ENCODE measurements at regions of chr9 and their contacts with region 1.

Region 1: GRCh38 chr9:129139993-129140396 is 28.8 kb downstream of the PTPA start:
- DNase-seq: peak; percentile 31 to 82 (median 66)
- ATAC-seq: peak; percentile 90
- H3K4me3 ChIP-seq: peak overlapping the region; percentile 64
- H3K4me3 Mint-ChIP-seq: peak overlapping the region; percentile 85 to 96 (median 90)
- H3K27ac ChIP-seq: peak overlapping the region; percentile 92
- H3K27ac Mint-ChIP-seq: peak overlapping the region; percentile 88 to 99 (median 94)
- H3K4me1 ChIP-seq: peaks cover 24 to 35% of the 10 kb centered on the region in 2 donors
- H3K4me1 Mint-ChIP-seq: peaks cover 11 to 45% (median 29%) of the 10 kb centered on the region in 7 donors
- H3K27me3 ChIP-seq: no peaks in the 10 kb centered on the region
- H3K27me3 Mint-ChIP-seq: no peaks in the 10 kb centered on the region

Region 2: DNA sequence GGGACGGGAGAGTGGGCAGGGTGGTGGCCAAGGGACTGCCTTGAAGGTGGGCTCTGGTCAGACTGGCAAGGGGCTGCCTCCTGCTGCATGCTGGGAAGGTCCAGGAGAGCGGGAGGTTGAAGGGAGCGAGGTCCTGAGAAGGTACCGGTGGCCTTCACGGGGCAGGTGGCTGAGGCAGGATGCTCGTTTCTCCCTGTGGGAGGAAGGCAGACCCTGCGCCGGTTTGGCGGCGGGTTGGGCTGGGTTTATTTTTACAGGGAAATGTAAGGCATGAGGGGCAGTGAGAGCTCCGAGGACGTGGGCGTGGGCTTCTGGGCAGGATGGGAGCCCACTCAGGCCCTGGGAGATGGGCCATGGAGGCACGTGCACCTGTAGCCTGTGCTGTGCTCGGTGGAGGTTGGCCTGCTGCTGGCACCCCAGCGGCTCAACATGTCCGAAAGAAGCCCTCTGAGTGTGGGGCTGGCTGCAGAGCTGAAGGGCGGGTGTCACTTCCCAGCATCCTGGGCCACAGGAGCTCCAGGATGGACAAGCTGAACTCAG is 10.7 kb after region 1 on chr9:
- CTCF ChIA-PET with region 1: interaction called, 14 read pairs
- POLR2A ChIA-PET with region 1: interaction called, 3 read pairs
- intact Hi-C with region 1: no loop called
- DNase-seq: no peak
- ATAC-seq: no peak
- H3K4me3 ChIP-seq: no peak overlapping the region
- H3K4me3 Mint-ChIP-seq: no peak overlapping the region
- H3K27ac ChIP-seq: no peak overlapping the region
- H3K27ac Mint-ChIP-seq: no peak overlapping the region
- H3K4me1 ChIP-seq: no peaks in the 10 kb centered on the region
- H3K4me1 Mint-ChIP-seq: peaks cover 0 to 11% (median 0%) of the 10 kb centered on the region in 7 donors
- H3K27me3 ChIP-seq: no peaks in the 10 kb centered on the region
- H3K27me3 Mint-ChIP-seq: no peaks in the 10 kb centered on the region

Region 3: DNA sequence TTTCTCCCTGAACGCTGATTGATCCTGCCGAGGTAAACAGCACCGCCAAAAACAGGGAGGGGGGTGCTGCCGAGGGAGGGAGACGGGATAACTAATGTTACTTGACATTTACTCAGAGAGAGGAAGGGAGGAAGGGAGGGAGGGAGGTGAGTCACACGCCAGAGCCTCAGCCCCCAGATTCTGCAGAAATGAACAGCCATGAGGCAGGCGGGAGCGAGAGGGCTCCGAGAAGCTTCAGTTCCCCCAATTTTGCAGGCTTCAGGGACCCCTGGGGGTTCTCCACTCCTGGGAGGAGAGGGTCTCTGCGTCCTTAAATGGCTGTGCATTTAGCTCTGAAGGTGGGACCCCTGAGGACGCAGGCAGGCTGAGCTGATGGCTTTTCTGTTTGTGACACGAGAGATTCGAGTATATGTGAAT is 97.2 kb after region 1 on chr9:
- CTCF ChIA-PET with region 1: interaction called, 7 read pairs
- POLR2A ChIA-PET with region 1: interaction called, 10 read pairs
- intact Hi-C with region 1: no loop called
- DNase-seq: peak in 8 of 9 donors; percentile 12 to 61 (median 38)
- ATAC-seq: peak; percentile 45
- H3K4me3 ChIP-seq: peak overlapping the region; percentile 66
- H3K4me3 Mint-ChIP-seq: peak overlapping the region; percentile 87 to 97 (median 92)
- H3K27ac ChIP-seq: peak overlapping the region; percentile 77
- H3K27ac Mint-ChIP-seq: peak overlapping the region; percentile 85 to 98 (median 95)
- H3K4me1 ChIP-seq: peaks cover 35 to 36% of the 10 kb centered on the region in 2 donors
- H3K4me1 Mint-ChIP-seq: peaks cover 38 to 77% (median 71%) of the 10 kb centered on the region in 7 donors
- H3K27me3 ChIP-seq: no peaks in the 10 kb centered on the region
- H3K27me3 Mint-ChIP-seq: no peaks in the 10 kb centered on the region

Region 4: GRCh38 chr9:129487642-129488409 is 347.8 kb after region 1 on chr9:
- CTCF ChIA-PET with region 1: no interaction called
- POLR2A ChIA-PET with region 1: no interaction called
- intact Hi-C with region 1: loop called in 1 of 2 experiments (anchors 2 kb)
- DNase-seq: peak in 5 of 9 donors; percentile 29 to 54 (median 43)
- ATAC-seq: peak; percentile 3
- H3K4me3 ChIP-seq: peak overlapping the region; percentile 70
- H3K4me3 Mint-ChIP-seq: peak overlapping the region; percentile 75 to 92 (median 90)
- H3K27ac ChIP-seq: peak overlapping the region; percentile 66
- H3K27ac Mint-ChIP-seq: peak overlapping the region; percentile 87 to 99 (median 94)
- H3K4me1 ChIP-seq: peaks cover 32 to 46% of the 10 kb centered on the region in 2 donors
- H3K4me1 Mint-ChIP-seq: peaks cover 36 to 68% (median 58%) of the 10 kb centered on the region in 7 donors
- H3K27me3 ChIP-seq: no peaks in the 10 kb centered on the region
- H3K27me3 Mint-ChIP-seq: no peaks in the 10 kb centered on the region

Region 5: GRCh38 chr9:129726322-129727160 is 586.5 kb after region 1 on chr9:
- CTCF ChIA-PET with region 1: interaction called, 3 read pairs
- POLR2A ChIA-PET with region 1: no interaction called
- intact Hi-C with region 1: loop called in 1 of 2 experiments (anchors 5 kb)
- DNase-seq: peak; percentile 30 to 73 (median 56)
- ATAC-seq: peak; percentile 95
- H3K4me3 ChIP-seq: no peak overlapping the region
- H3K4me3 Mint-ChIP-seq: peak overlapping the region in 9 of 10 donors; percentile 16 to 63 (median 55)
- H3K27ac ChIP-seq: no peak overlapping the region
- H3K27ac Mint-ChIP-seq: no peak overlapping the region
- H3K4me1 ChIP-seq: no peaks in the 10 kb centered on the region
- H3K4me1 Mint-ChIP-seq: peaks cover 0 to 4% (median 3%) of the 10 kb centered on the region in 7 donors
- H3K27me3 ChIP-seq: no peaks in the 10 kb centered on the region
- H3K27me3 Mint-ChIP-seq: peaks cover 0 to 23% (median 5%) of the 10 kb centered on the region in 5 donors

Region 6: GRCh38 chr9:130235897-130236668 is 1096.1 kb after region 1 on chr9:
- CTCF ChIA-PET with region 1: no interaction called
- POLR2A ChIA-PET with region 1: no interaction called
- intact Hi-C with region 1: loop called in 1 of 2 experiments (anchors 5 kb)
- DNase-seq: peak; percentile 41 to 79 (median 63)
- ATAC-seq: peak; percentile 79
- H3K4me3 ChIP-seq: no peak overlapping the region
- H3K4me3 Mint-ChIP-seq: peak overlapping the region in 7 of 10 donors; percentile 24 to 75 (median 54)
- H3K27ac ChIP-seq: no peak overlapping the region
- H3K27ac Mint-ChIP-seq: peak overlapping the region in 1 of 9 donors; percentile 43
- H3K4me1 ChIP-seq: peaks cover 7 to 11% of the 10 kb centered on the region in 2 donors
- H3K4me1 Mint-ChIP-seq: peaks cover 0 to 25% (median 15%) of the 10 kb centered on the region in 7 donors
- H3K27me3 ChIP-seq: no peaks in the 10 kb centered on the region
- H3K27me3 Mint-ChIP-seq: peaks cover 0 to 2% (median 0%) of the 10 kb centered on the region in 5 donors